ENCODE measurements at regions of chr11 and their contacts with region 1.

Region 1: DNA sequence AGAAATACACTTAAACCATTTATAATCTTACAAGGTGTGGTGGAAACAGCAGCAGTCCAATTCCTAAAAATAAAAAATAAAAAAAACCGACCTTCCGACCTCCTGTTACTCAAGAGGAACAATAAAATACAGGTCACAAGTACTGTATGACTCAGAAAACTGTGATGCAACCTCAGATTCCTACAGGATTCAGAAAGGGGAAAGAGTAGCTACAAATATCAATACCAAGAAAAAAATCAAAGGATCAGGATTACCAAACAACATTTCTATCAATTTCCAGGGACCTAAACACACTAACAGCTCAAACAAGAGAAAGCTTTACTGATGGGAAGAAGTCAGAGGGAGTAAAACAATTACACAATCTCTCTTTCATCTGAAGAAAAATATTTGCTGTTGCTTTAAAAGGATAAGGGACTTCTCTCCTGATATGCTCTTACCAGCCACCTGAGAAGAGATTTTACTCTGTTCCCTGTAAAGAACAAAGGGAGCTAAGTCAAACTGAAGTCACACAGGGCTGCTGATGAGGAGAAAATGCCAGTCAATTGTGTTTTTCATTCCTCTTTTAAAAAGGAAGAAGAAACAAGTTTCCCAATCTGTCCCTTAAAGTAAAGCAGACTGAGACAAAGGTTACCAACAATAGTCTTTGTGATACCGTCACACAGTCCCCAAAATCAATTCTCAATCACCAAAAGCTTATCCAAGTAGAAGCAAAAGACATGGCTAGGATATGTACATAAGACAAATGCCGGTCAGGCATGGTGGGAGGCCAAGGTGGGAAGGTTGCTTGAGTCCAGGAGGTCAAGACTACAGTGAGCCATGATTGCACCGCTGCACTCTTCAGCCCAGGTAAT is 39.4 kb downstream of the AMBRA1 start:
- DNase-seq: peak; percentile 99
- ATAC-seq: peak; percentile 83
- H3K4me3 ChIP-seq: peak overlapping the region in 1 of 3 experiments; percentile 34; a peak in 1 of 6 replicates
- H3K27ac ChIP-seq: peak overlapping the region; percentile 91
- H3K4me1 ChIP-seq: peaks cover 65% of the 10 kb centered on the region
- H3K27me3 ChIP-seq: no peaks in the 10 kb centered on the region
- CTCF ChIP-seq: no peak
- EP300 ChIP-seq: peak; percentile 85 to 98; a peak in 3 of 4 replicates
- POLR2A ChIP-seq: no peak
- RAD21 ChIP-seq: no peak

Region 2: GRCh38 chr11:46611526-46612304 is 57.3 kb after region 1 on chr11:
- CTCF ChIA-PET with region 1: no interaction called
- POLR2A ChIA-PET with region 1: interaction called, 14 read pairs
- in situ Hi-C with region 1: no loop called
- intact Hi-C with region 1: no loop called
- DNase-seq: peak; percentile 51
- ATAC-seq: peak; percentile 72
- H3K4me3 ChIP-seq: no peak overlapping the region
- H3K27ac ChIP-seq: peak overlapping the region; percentile 72
- H3K4me1 ChIP-seq: peaks cover 45% of the 10 kb centered on the region
- H3K27me3 ChIP-seq: no peaks in the 10 kb centered on the region
- CTCF ChIP-seq: no peak
- EP300 ChIP-seq: no peak; a peak in 1 of 4 replicates
- POLR2A ChIP-seq: no peak
- RAD21 ChIP-seq: no peak

Region 3: DNA sequence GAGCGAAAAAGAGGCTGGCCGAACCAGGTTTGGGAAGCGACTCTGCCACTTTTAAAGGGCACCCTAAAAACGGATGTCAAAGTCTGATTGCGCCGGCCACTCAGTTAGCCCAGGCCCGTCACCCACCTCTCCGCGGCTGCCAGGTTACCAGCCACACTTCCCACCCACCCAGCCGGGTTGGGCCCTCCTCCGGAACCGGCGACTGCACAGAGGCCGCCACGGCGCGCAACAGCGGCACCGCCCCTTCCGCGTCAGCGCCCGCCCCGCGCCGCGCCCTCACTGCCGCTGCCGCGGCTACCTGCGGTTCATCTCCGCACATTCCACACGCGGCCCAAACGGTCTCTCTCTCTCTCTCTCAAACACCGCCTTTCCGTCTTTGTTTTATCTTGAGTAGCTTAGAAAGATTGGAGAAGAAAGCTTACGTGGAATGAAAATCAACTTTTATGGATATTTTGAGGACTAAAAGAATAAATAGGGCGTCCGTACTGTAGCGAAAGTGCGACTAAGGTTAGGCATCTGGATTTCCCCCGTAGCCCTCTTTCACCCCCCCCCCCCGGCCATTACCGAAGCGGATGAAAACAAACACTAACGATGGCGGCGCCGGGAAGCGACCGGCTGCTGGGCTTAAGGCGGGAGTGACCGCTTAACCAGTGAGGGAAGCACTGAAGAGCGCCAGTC is 62.7 kb after region 1 on chr11 and contains the starts of genes ATG13 and HARBI1:
- CTCF ChIA-PET with region 1: no interaction called
- POLR2A ChIA-PET with region 1: interaction called, 14 read pairs
- in situ Hi-C with region 1: no loop called
- intact Hi-C with region 1: loop called (anchors 1 kb)
- DNase-seq: peak; percentile 77
- ATAC-seq: peak; percentile 97
- H3K4me3 ChIP-seq: peak within 1 kb of the TSS; percentile 99 to 100 (median 100)
- H3K27ac ChIP-seq: peak within 1 kb of the TSS; percentile 98
- H3K4me1 ChIP-seq: peaks cover 53% of the 10 kb centered on the region
- H3K27me3 ChIP-seq: no peaks in the 10 kb centered on the region; a peak in 1 of 5 replicates
- CTCF ChIP-seq: no peak
- EP300 ChIP-seq: peak in 1 of 2 experiments; percentile 45; a peak in 1 of 4 replicates
- POLR2A ChIP-seq: peak; percentile 60 to 87
- RAD21 ChIP-seq: 0 out of 2 replicates have a peak, but pooled peaks have one; percentile 12
- total RNA-seq, gene ATG13: 55.0 and 61.8 TPM in 2 replicates
- total RNA-seq, gene HARBI1: 4.8 and 6.9 TPM in 2 replicates

Region 4: DNA sequence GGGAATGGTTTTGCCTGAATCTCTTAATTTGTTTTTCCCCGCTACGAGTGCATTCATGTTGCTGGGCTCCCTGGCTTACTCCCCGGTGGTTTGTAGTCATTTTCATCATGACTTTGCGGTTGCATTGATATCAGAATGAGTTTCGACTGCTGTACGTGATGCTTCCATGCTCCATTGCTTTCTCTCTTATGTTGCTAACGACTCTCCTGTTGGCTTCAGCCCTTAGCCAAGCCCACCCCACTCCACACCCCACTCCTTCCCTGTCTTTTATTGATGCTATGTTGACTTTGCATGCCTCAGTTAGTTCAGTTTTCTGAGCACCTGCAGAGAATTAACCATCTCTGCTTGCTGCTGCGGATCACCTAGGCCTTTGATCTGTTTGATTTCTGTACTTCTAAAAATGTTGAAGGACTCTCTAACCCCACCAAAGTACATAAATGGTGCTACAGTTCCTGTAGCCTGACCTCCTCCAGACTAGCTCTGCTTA is 556.9 kb after region 1 on chr11:
- CTCF ChIA-PET with region 1: no interaction called
- POLR2A ChIA-PET with region 1: no interaction called
- in situ Hi-C with region 1: no loop called
- intact Hi-C with region 1: no loop called
- DNase-seq: no peak
- ATAC-seq: no peak
- H3K4me3 ChIP-seq: no peak overlapping the region
- H3K27ac ChIP-seq: no peak overlapping the region
- H3K4me1 ChIP-seq: no peaks in the 10 kb centered on the region
- H3K27me3 ChIP-seq: no peaks in the 10 kb centered on the region
- CTCF ChIP-seq: no peak
- EP300 ChIP-seq: no peak
- POLR2A ChIP-seq: no peak
- RAD21 ChIP-seq: no peak